ENCODE measurements at regions of chr17 and their contacts with region 1.

Region 1: GRCh38 chr17:81294856-81295680 is at the start of gene SLC38A10:
- DNase-seq: peak; percentile 95 to 96 (median 96)
- ATAC-seq: peak; percentile 93
- H3K4me3 ChIP-seq: peak within 1 kb of the TSS; percentile 77
- H3K4me1 ChIP-seq: peaks cover 25% of the 10 kb centered on the region
- CTCF ChIP-seq: no peak
- total RNA-seq, gene SLC38A10: 77.0 to 95.3 (median 94.0) TPM

Region 2: DNA sequence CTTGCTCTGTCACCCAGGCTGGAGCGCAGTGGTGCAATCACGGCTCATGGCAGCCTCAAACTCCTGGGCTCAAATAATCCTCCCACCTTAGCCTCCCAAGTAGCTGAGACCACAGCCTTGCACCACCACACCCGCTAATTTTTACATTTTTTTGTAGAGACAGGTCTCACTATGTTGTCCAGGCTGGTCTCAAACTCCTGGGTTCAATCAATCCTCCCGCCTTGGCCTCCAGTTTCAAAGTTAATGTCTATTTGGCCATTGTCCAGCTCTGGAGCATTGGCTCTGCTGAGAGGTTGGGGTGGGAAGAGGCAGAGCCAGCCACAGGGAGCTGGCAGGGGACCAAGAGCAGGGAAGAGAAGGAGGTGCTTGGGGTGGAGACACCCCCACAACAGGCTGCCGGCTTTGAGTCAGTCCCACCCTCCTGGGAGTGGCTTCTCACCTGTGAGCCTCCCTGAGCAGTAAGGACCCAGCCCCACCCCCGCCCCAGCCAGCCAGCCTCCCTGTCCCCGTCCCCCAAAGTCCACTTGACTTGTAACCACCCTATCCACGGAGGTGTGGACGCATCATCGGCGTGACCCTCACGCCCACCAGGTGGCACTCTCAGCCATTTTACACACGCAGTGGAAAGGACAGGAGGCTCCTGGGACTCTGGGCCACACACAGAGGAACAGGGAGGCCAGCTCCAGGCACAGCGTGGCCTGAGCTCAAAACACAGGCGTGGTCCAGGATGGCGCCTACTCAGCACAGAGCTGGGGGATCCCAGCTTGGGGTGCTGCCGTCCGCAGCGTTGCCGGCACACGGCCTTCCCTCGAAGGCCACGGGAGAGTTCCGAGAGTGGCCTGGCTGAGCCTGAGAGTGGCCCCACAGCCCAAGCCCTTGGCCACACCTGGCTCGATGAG is 152.5 kb before region 1 on chr17:
- intact Hi-C with region 1: no loop called
- DNase-seq: peak in 2 of 3 donors; percentile 85 to 90
- ATAC-seq: peak; percentile 91
- H3K4me3 ChIP-seq: no peak overlapping the region
- H3K4me1 ChIP-seq: no peaks in the 10 kb centered on the region
- CTCF ChIP-seq: peak; percentile 34

Region 3: GRCh38 chr17:81176665-81177064 is 118.4 kb before region 1 on chr17:
- intact Hi-C with region 1: no loop called
- DNase-seq: no peak
- ATAC-seq: no peak
- H3K4me3 ChIP-seq: no peak overlapping the region
- H3K4me1 ChIP-seq: no peaks in the 10 kb centered on the region
- CTCF ChIP-seq: no peak

Region 4: DNA sequence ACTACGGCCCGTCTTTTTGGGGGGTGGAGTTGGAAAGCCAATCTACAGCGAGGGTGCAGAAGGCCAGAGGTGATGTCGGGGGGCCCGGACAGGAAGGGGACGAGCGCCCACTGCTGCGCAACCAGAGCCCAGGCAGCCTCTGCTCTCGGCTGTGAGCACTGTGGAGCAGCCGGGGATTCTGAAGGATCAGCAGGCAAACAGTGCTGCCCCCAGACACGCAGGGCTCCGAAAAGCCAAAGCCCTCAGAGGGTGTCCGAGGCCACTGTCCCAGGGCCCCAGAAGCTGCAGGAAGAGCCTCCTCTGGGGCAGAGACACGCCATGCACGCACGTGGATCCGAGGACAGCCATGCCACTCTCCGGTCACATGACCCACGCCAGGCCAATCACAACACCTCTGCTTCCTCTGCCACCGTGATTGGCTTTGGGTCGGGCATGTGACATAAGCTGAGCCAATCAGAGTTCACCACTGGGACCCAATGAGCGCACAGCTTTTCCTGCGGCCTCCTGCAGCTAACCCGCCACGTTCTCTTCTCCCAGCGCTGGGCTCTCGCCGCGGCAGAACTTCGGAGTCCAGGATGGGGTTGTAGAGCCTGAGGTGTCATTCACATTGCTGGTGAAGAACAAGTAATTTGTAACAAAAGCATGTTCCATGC is 176.9 kb after region 1 on chr17:
- intact Hi-C with region 1: loop called in 1 of 2 experiments (anchors 5 kb)
- DNase-seq: peak; percentile 58 to 69 (median 60)
- ATAC-seq: peak; percentile 63
- H3K4me3 ChIP-seq: no peak overlapping the region
- H3K4me1 ChIP-seq: no peaks in the 10 kb centered on the region
- CTCF ChIP-seq: no peak

Measured in mucosa of descending colon (tissue), 3 donors.